Naive thymus-derived CD4-positive, alpha-beta T cell (primary cell): ENCODE measurements at regions of chr15 and their contacts with region 1.

Region 1: DNA sequence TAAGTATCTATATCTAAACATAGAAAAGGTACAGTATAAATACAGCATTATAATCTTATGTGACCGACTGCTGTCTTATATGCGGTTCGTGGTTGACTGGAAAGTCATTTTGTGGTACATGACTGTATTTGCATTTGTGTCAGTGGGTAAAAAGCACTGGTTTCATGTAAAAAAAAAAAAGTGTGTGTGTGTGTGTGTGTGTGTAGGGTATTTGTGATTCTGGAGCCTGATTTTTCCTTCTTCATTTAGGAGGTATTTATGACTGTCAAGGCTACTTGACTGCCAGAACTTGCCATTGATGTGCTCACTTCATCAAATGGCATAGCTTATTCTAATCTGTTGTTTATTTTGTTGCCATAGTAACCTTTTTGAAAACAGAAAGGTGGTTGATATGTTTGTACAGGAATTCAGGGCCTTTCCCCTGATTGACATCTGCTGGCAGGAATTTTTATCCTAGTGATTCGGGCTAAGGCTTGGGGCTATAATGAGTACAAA is 63.2 kb downstream of the AKAP13 start:
- DNase-seq: peak in 7 of 9 donors; percentile 2 to 42 (median 19)
- ATAC-seq: peak; percentile 76
- H3K4me3 ChIP-seq: no peak overlapping the region
- H3K4me3 Mint-ChIP-seq: peak overlapping the region in 7 of 10 donors; percentile 3 to 64 (median 47)
- H3K27ac ChIP-seq: no peak overlapping the region
- H3K27ac Mint-ChIP-seq: peak overlapping the region; percentile 10 to 88 (median 70)
- H3K4me1 ChIP-seq: peaks cover 5 to 33% of the 10 kb centered on the region in 2 donors
- H3K4me1 Mint-ChIP-seq: peaks cover 29 to 63% (median 58%) of the 10 kb centered on the region in 7 donors
- H3K27me3 ChIP-seq: no peaks in the 10 kb centered on the region
- H3K27me3 Mint-ChIP-seq: no peaks in the 10 kb centered on the region

Region 2: GRCh38 chr15:85407804-85408746 is 35.6 kb before region 1 on chr15:
- CTCF ChIA-PET with region 1: no interaction called
- POLR2A ChIA-PET with region 1: no interaction called
- intact Hi-C with region 1: loop called in 1 of 2 experiments (anchors 5 kb)
- DNase-seq: peak in 2 of 9 donors; percentile 23 to 27
- ATAC-seq: peak; percentile 81
- H3K4me3 ChIP-seq: no peak overlapping the region
- H3K4me3 Mint-ChIP-seq: peak overlapping the region; percentile 0 to 81 (median 46)
- H3K27ac ChIP-seq: no peak overlapping the region
- H3K27ac Mint-ChIP-seq: peak overlapping the region; percentile 8 to 92 (median 83)
- H3K4me1 ChIP-seq: peaks cover 24 to 40% of the 10 kb centered on the region in 2 donors
- H3K4me1 Mint-ChIP-seq: peaks cover 43 to 91% (median 73%) of the 10 kb centered on the region in 7 donors
- H3K27me3 ChIP-seq: no peaks in the 10 kb centered on the region
- H3K27me3 Mint-ChIP-seq: no peaks in the 10 kb centered on the region

Region 3: GRCh38 chr15:85475317-85475701 is 31.7 kb after region 1 on chr15:
- CTCF ChIA-PET with region 1: no interaction called
- POLR2A ChIA-PET with region 1: no interaction called
- intact Hi-C with region 1: no loop called
- DNase-seq: no peak
- ATAC-seq: peak; percentile 40
- H3K4me3 ChIP-seq: no peak overlapping the region
- H3K4me3 Mint-ChIP-seq: peak overlapping the region in 7 of 10 donors; percentile 1 to 70 (median 31)
- H3K27ac ChIP-seq: no peak overlapping the region
- H3K27ac Mint-ChIP-seq: peak overlapping the region in 5 of 9 donors; percentile 6 to 61 (median 39)
- H3K4me1 ChIP-seq: peaks cover 0 to 27% of the 10 kb centered on the region in 2 donors
- H3K4me1 Mint-ChIP-seq: peaks cover 42 to 99% (median 86%) of the 10 kb centered on the region in 7 donors
- H3K27me3 ChIP-seq: no peaks in the 10 kb centered on the region
- H3K27me3 Mint-ChIP-seq: no peaks in the 10 kb centered on the region

Region 4: GRCh38 chr15:85760531-85761371 is 317.1 kb after region 1 on chr15:
- CTCF ChIA-PET with region 1: no interaction called
- POLR2A ChIA-PET with region 1: no interaction called
- intact Hi-C with region 1: no loop called
- DNase-seq: no peak
- ATAC-seq: no peak
- H3K4me3 ChIP-seq: no peak overlapping the region
- H3K4me3 Mint-ChIP-seq: no peak overlapping the region
- H3K27ac ChIP-seq: no peak overlapping the region
- H3K27ac Mint-ChIP-seq: no peak overlapping the region
- H3K4me1 ChIP-seq: no peaks in the 10 kb centered on the region
- H3K4me1 Mint-ChIP-seq: peaks cover 0 to 6% (median 3%) of the 10 kb centered on the region in 7 donors
- H3K27me3 ChIP-seq: no peaks in the 10 kb centered on the region
- H3K27me3 Mint-ChIP-seq: no peaks in the 10 kb centered on the region